OCI-LY7 (cell line): ENCODE measurements at regions of chr4 and their contacts with region 1.

Region 1: DNA sequence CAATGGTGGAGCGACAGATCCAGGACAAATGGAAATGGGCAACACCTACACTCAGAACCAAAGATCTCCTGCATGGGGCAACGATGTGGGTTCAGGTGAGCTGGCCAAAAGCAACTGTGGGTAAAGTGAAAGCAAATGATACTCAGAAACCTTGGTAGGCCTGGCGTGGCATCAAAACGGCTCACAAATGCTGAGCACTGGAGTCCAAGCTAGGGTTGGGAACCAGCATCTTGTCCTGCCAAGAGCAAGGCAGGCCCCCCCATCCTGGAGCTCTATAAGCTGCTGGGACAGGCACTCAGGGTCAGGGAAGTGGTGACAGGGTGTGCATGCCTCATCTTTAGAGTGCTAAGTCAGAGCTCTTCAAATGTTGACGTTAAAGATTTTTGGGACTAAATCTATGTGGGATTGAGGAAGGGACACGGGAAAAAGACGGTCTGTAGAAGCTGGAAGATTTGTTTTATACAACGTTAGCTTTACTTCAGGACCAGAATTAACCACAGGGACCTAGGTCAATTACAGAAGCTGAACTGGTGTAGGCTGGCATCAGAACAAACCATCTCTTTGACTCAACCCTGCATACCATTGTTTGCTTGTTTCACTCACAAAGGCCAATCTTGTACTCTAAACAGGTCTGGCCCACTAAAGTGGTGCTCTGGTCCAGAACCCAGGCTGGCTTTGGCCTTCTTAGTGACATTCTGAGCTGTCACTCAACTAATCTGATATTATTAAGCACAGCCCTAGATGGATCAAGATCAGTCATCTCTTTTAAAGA is 10.7 kb downstream of the ATP8A1 start:
- DNase-seq: no peak
- H3K4me3 ChIP-seq: peak overlapping the region; percentile 65
- H3K27ac ChIP-seq: peak overlapping the region; percentile 99
- H3K4me1 ChIP-seq: peaks cover 89% of the 10 kb centered on the region
- CTCF ChIP-seq: no peak

Region 2: DNA sequence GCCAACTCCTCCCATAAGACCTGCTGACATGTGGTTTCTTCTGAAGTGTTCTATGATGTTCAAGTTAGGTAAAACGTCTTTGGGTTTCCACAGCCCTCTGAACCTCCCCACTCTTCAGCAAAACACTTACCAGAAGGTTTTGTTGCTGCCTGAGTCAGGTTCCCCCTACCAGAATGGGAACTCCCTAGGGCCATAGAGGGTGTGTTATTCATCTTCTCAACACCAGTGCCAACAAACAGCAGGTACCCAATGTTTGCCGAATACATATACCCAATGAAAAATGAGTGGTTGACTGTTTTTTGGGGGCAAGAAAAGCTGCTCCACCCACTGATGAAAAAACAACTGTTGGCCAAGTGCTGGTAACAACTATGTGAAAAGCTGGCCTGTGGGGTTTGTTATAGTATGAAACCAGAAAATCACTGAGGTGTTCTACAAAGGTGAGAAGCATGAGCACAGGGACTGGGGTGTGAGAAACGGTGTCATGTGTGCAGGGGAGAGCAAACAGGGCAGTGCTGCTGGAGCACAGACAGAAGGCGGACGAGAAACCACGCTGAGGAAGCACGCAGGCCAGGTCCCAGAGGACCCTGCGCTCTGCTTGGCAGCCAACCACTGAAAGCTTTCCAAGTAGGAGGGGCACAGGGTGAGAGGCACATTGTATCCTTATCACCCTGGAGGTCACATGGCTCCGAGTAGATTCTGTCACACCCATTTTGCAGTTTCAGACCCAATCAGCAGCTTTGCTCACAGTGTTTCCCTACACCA is 18.1 kb before region 1 on chr4:
- CTCF ChIA-PET with region 1: interaction called, 4 read pairs
- POLR2A ChIA-PET with region 1: interaction called, 35 read pairs
- intact Hi-C with region 1: no loop called
- DNase-seq: peak; percentile 81
- H3K4me3 ChIP-seq: peak overlapping the region; percentile 44
- H3K27ac ChIP-seq: peak overlapping the region; percentile 73
- H3K4me1 ChIP-seq: peaks cover 89% of the 10 kb centered on the region
- CTCF ChIP-seq: no peak

Region 3: GRCh38 chr4:42747971-42748370 is 101.8 kb after region 1 on chr4:
- CTCF ChIA-PET with region 1: no interaction called
- POLR2A ChIA-PET with region 1: no interaction called
- intact Hi-C with region 1: no loop called
- DNase-seq: no peak
- H3K4me3 ChIP-seq: no peak overlapping the region
- H3K27ac ChIP-seq: no peak overlapping the region
- H3K4me1 ChIP-seq: no peaks in the 10 kb centered on the region
- CTCF ChIP-seq: no peak

Region 4: DNA sequence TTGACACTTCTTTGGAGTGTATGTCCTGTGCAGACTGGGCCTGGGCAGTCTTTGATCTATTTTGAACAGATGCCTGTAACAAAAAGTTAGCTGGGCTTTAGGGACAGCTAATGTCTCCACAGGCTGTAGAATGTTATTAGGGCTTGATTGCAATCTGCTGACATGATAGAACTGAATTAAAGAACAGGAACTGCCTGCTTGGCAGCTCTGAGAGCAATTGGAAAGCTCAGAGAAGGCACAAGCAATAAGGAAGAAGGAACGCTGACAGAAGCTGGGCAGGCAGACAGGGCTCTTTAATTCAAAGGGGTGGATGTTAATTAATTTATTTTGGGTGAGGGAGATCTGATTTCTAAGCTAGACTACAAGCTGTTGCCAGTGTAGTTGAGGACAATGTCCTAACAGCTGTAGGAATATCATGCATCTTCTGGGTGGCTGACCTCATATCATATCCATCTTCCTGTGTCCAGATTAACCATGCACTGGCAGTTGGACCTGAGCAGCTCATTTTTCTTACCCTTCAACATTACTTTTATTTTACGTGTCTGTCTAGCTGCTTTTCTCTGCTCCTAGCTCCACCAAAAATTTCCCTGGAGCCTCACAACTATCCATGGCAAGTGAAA is 225.6 kb after region 1 on chr4:
- CTCF ChIA-PET with region 1: no interaction called
- POLR2A ChIA-PET with region 1: no interaction called
- intact Hi-C with region 1: no loop called
- DNase-seq: no peak
- H3K4me3 ChIP-seq: no peak overlapping the region
- H3K27ac ChIP-seq: no peak overlapping the region
- H3K4me1 ChIP-seq: no peaks in the 10 kb centered on the region
- CTCF ChIP-seq: no peak